Pancreas (tissue), 10 donors: ENCODE measurements at regions of chr12 and their contacts with region 1.

Region 1: GRCh38 chr12:49515266-49515665 is 23.6 kb upstream of the KCNH3 start:
- DNase-seq: no peak
- ATAC-seq: peak in 2 of 4 donors; percentile 30 to 67
- H3K4me3 ChIP-seq: no peak overlapping the region
- H3K27ac ChIP-seq: no peak overlapping the region
- H3K4me1 ChIP-seq: peaks cover 0 to 3% (median 0%) of the 10 kb centered on the region in 3 donors
- H3K27me3 ChIP-seq: no peaks in the 10 kb centered on the region
- CTCF ChIP-seq: no peak

Region 2: GRCh38 chr12:49342066-49342913 is 173.0 kb before region 1 on chr12:
- intact Hi-C with region 1: loop called in 1 of 3 experiments (anchors 10 kb)
- DNase-seq: peak; percentile 56 to 86 (median 76)
- ATAC-seq: peak; percentile 36 to 72 (median 66)
- H3K4me3 ChIP-seq: peak overlapping the region in 3 of 4 donors; percentile 11 to 41 (median 23)
- H3K27ac ChIP-seq: no peak overlapping the region
- H3K4me1 ChIP-seq: peaks cover 13 to 26% (median 18%) of the 10 kb centered on the region in 3 donors
- H3K27me3 ChIP-seq: peaks cover 0 to 4% (median 0%) of the 10 kb centered on the region in 4 donors
- CTCF ChIP-seq: peak; percentile 52 to 72 (median 64)

Region 3: DNA sequence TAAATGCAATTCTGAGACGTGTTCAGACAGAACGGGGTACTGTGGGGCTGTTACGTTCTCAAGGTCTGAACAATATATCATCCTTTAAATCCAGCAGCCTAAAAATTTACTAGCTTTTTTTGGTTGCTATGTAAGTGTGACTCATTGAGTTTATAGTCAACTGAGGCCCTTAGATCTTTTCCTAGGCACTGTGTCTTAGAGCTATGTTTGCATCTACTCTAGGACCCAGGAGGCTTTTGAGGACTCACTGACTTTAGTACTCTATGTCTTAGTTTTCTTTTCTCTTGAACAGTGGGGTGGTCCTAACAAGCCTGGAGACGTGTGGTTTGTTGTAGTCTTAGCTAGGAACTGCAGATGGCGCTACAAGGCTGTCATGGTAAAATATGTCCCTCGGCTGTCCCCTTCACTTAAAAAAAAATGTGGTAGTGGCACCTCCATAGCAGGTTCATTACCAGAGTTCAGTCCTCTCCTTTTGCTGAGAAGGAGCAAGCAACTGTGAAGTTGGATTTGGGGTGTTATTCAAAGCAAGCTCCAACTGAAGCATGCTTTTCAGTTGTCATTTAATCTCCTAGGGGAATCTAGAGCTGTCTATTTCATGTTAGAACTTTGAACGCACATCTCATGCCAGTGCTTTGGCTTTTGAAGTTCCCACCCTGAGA is 156.7 kb before region 1 on chr12:
- intact Hi-C with region 1: loop called in 2 of 3 experiments (anchors 5 kb)
- DNase-seq: peak in 2 of 6 donors; percentile 34 to 58
- ATAC-seq: peak; percentile 73 to 97 (median 95)
- H3K4me3 ChIP-seq: no peak overlapping the region
- H3K27ac ChIP-seq: no peak overlapping the region
- H3K4me1 ChIP-seq: no peaks in the 10 kb centered on the region
- H3K27me3 ChIP-seq: no peaks in the 10 kb centered on the region
- CTCF ChIP-seq: peak; percentile 35 to 71 (median 43)